ENCODE measurements at regions of chr3 and their contacts with region 1.

Region 1: GRCh38 chr3:170037463-170038433 is at the start of gene GPR160:
- DNase-seq: peak; percentile 89
- H3K4me3 Mint-ChIP-seq: peak within 1 kb of the TSS; percentile 82
- H3K27ac Mint-ChIP-seq: no peak within 1 kb of the TSS
- H3K4me1 Mint-ChIP-seq: peaks cover 14% of the 10 kb centered on the region
- H3K27me3 Mint-ChIP-seq: no peaks in the 10 kb centered on the region
- total RNA-seq, gene GPR160: 5.7 to 7.0 TPM

Region 2: GRCh38 chr3:169863458-169863899 is 174.3 kb before region 1 on chr3:
- CTCF ChIA-PET with region 1: interaction called, 4 read pairs
- POLR2A ChIA-PET with region 1: no interaction called
- intact Hi-C with region 1: loop called (anchors 5 kb)
- DNase-seq: peak; percentile 79
- H3K4me3 Mint-ChIP-seq: no peak overlapping the region
- H3K27ac Mint-ChIP-seq: no peak overlapping the region
- H3K4me1 Mint-ChIP-seq: peaks cover 8% of the 10 kb centered on the region
- H3K27me3 Mint-ChIP-seq: peaks cover 10% of the 10 kb centered on the region

Region 3: DNA sequence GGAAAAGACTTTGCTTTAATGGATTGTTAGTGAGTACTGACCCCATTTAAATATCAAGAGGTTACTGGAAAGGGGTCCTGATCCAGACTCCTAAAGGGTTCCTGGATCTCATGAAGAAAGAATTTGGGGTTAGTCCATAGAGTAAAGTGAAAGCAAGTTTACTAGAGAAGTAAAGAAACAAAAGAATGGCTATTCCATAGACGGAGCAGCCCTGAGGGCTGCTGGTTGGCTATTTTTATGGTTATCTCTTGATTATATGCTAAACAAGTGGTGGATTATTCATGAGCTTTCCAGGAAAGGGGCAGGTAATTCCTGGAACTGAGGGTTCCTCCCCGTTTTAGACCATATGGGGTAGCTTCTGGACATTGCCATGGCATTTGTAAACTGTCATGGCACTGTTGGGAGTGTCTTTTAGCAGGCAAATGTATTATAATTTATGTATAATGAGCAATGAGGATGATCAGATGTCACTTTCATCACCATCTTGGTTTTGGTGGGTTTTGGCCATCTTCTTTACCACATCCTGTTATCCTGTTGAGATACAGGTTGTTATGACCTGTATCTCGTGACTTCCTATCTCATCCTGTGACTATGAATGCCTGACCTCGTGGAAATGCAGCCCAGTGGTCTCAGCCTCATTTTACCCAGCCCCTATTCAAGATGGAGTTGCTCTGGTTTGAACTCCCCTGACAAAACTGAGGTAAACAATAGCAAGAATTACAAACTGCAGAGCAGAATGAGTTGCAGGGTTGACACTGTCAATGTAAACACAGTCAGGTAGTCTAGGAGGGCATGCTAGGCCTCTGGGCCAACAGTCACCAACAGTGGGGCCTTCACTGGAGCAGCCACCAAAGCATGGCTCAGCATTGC is 10.3 kb before region 1 on chr3:
- CTCF ChIA-PET with region 1: no interaction called
- POLR2A ChIA-PET with region 1: no interaction called
- intact Hi-C with region 1: loop called (anchors 1 kb)
- DNase-seq: peak; percentile 59
- H3K4me3 Mint-ChIP-seq: no peak overlapping the region
- H3K27ac Mint-ChIP-seq: peak overlapping the region; percentile 72
- H3K4me1 Mint-ChIP-seq: peaks cover 23% of the 10 kb centered on the region
- H3K27me3 Mint-ChIP-seq: no peaks in the 10 kb centered on the region